Posterior cingulate gyrus (tissue), 11 donors: ENCODE measurements at regions of chr4 and their contacts with region 1.

Region 1: DNA sequence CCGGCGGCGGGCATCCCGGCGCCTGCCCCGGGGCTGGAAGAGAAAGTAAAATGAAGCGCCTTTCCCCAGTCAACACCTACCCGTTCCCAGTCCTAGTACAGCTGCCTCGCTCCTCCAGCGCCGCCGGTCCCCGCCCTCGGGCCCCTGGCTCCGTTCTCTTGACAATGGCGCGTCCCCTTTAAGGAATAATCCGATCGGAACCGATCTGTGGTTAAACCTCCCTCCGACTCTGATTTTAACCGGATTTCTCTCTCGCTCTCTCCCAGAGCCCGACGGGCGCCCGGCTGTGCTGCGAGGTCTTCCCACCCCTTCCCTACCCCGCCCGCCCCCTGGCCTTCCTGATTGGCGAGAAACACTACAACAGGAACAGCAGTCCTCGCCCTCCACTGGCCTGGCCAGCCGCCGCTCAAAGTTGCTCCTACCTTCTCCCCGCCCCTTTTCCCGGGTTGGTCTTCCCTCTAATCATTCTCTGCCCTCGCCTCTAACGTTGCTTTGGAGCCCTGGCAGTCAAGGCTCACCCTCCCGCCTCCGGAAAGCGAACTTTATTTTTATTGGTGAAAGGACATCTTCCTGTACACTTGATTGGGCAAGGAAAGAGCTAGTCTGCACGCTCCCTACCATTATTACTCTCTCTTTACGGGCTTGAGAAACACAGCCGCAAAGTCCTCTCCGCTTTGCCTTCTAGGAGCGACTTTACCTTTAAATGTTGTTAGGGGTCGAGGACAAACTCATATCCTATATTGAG is at the start of gene FRYL:
- DNase-seq: peak; percentile 99 to 100 (median 100)

Region 2: DNA sequence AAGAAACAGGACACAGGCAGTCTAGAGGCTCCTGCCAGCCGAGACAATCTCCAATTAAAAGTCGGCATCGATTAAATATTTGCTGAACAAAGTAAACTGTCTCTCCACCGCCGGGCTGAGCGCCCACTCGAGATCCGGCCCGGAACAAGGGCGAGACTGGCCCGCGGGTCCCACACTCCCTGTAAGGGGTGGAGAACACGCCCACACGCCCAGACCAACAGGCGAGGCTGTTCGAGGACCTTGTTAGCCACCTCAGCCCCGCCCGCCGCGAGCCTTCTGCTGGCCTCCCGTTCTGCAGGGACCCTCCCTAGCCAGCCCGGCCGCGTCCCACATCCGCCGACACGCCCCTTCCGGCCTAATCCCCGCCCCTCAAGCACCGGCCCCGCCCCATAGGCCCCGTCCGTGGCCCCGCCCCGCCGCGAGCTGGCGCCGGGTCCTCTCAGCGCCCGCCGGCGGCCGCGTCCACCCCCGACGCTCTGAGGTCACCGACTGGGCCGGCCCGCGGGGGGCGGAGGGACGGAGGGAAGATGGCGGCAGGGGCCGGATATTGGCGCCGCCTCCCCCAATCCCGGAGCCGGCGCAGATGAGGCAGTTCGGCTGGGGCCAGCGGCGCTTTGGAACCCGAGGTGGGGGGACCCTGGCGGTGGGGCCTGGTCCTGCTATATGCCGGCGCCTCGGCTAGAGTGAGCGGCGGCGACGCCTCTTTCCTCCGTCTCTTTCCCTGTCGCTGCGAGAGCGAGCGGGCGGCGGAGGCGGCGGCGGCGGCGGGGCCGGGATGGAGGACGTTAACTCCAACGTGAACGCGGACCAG is 439.0 kb before region 1 on chr4 and contains the start of gene SLAIN2:
- intact Hi-C with region 1: loop called (anchors 10 kb)
- DNase-seq: peak; percentile 96 to 100 (median 98)

Region 3: DNA sequence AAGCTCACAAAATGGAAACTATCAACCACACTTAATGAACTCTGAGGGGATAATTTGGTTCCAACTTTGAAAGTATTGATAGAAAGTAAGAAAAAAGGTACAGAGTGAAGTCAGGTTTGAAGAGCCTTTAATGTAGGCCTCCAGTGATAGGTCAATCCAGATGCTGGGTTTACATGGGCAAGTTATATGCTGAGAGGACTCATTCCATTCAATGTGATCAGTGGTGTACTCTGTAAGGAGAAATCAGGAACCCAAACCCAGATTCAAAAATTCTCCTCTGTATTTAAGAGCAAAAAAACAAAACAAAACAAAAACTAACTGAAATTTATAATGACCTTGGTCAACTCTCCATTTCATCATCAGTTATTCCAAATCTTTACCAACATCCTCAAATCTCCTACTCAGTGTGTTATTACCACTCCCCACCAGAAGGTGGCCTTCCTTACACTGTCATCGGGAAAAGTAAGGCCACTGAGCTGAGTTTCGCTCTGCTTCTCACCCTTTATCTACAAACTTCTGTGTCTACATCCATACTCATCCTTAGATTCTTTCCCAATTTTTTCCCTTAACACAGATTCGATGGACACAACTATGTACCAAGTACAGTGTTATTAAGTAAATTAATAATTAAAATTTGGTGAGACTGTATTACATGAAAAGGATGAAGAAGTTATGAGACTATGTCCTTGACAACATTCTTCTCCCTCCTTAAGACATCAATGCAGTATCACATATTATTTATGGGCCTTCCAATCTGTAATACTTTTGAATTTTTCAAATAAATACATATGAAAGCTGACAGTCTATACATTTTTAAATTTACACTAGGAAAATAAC is 201.8 kb before region 1 on chr4:
- intact Hi-C with region 1: loop called (anchors 2 kb)
- DNase-seq: peak in 5 of 10 donors; percentile 18 to 66 (median 51)

Region 4: DNA sequence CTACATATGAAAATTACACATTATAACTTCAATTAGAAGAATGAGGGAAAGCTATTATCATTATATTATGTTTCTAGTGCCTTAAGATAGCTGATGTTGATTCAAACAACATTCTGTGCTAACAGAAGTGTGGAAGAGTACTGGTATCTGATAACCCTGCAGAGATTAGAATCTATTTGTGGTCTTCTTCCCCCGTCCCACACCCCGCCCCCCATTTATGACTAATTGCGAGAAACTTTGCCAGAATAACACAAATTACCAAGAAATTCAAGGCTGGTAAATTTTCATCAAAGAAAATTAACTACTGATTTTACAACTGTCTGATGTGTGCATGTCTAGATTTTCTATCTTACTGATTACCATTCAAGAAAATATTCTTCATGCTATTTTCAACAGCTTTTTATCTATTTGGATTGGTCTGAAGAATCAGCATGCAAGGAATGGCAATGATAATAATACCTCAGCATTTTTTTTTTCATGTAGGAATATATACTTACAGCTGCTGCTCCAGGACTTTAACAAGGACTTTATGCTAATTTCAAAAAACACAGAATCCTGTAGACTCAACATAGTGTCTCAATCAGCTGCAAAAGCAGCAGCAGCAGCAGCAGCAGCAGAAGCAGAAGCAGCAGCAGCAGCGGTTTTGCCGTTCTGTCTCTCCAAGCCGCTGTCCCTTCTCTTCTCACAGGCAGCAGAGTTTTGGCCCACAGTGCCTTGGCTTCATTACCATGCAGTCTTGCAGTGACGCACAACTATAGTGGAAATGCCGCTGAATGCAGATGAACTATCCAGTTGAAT is 126.8 kb before region 1 on chr4:
- intact Hi-C with region 1: loop called (anchors 5 kb)
- DNase-seq: peak; percentile 66 to 96 (median 78)

Region 5: GRCh38 chr4:48830706-48831531 is 50.7 kb after region 1 on chr4 and contains the start of gene OCIAD1:
- intact Hi-C with region 1: loop called (anchors 1 kb)
- DNase-seq: peak; percentile 94 to 99 (median 98)

Region 6: GRCh38 chr4:48909697-48910096 is 129.5 kb after region 1 on chr4:
- intact Hi-C with region 1: no loop called
- DNase-seq: peak in 4 of 10 donors; percentile 17 to 90 (median 64)

Region 7: GRCh38 chr4:48963042-48963679 is 183.0 kb after region 1 on chr4:
- intact Hi-C with region 1: loop called (anchors 2 kb)
- DNase-seq: peak in 8 of 10 donors; percentile 27 to 92 (median 68)